ENCODE measurements at regions of chr16 and their contacts with region 1.

Region 1: GRCh38 chr16:69286941-69287713 is 24.0 kb upstream of the VPS4A start:
- DNase-seq: peak in 6 of 9 experiments; percentile 8 to 78 (median 48)
- ATAC-seq: no peak
- H3K4me3 ChIP-seq: no peak overlapping the region
- H3K4me3 Mint-ChIP-seq: no peak overlapping the region
- H3K27ac ChIP-seq: no peak overlapping the region
- H3K27ac Mint-ChIP-seq: no peak overlapping the region
- H3K4me1 ChIP-seq: no peaks in the 10 kb centered on the region
- H3K4me1 Mint-ChIP-seq: peaks cover 2% of the 10 kb centered on the region
- H3K27me3 ChIP-seq: no peaks in the 10 kb centered on the region
- H3K27me3 Mint-ChIP-seq: no peaks in the 10 kb centered on the region
- CTCF ChIP-seq: peak; percentile 73

Region 2: GRCh38 chr16:69150146-69150865 is 136.8 kb before region 1 on chr16:
- CTCF ChIA-PET with region 1: interaction called, 171 read pairs
- POLR2A ChIA-PET with region 1: interaction called, 7 read pairs
- intact Hi-C with region 1: loop called in 1 of 2 experiments (anchors 1 kb)
- DNase-seq: peak in 7 of 9 experiments; percentile 32 to 81 (median 60)
- ATAC-seq: peak; percentile 77
- H3K4me3 ChIP-seq: no peak overlapping the region
- H3K4me3 Mint-ChIP-seq: no peak overlapping the region
- H3K27ac ChIP-seq: no peak overlapping the region
- H3K27ac Mint-ChIP-seq: no peak overlapping the region
- H3K4me1 ChIP-seq: no peaks in the 10 kb centered on the region
- H3K4me1 Mint-ChIP-seq: no peaks in the 10 kb centered on the region
- H3K27me3 ChIP-seq: no peaks in the 10 kb centered on the region
- H3K27me3 Mint-ChIP-seq: no peaks in the 10 kb centered on the region
- CTCF ChIP-seq: peak; percentile 71

Region 3: DNA sequence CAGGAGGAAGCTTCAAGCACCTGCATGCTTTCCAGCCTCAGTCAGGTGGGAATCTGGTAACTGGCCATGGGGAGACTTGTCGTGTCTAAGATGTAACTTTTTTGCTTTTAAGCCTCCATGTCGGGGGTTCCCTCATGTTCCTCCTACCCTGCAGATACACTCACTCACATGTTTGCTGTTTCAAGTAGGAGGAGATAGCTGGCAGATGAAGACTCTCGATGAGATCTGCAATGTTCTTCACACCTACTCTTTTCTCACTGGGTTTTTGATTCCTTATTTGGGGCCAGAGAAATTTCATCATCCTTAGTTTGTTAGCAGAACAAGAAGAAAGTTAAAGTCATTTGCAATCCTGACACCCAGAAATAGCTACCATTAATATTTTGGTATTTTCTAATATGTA is 129.9 kb before region 1 on chr16:
- CTCF ChIA-PET with region 1: interaction called, 171 read pairs
- POLR2A ChIA-PET with region 1: no interaction called
- intact Hi-C with region 1: no loop called
- DNase-seq: no peak
- ATAC-seq: no peak
- H3K4me3 ChIP-seq: no peak overlapping the region
- H3K4me3 Mint-ChIP-seq: no peak overlapping the region
- H3K27ac ChIP-seq: no peak overlapping the region
- H3K27ac Mint-ChIP-seq: no peak overlapping the region
- H3K4me1 ChIP-seq: no peaks in the 10 kb centered on the region
- H3K4me1 Mint-ChIP-seq: no peaks in the 10 kb centered on the region
- H3K27me3 ChIP-seq: no peaks in the 10 kb centered on the region
- H3K27me3 Mint-ChIP-seq: no peaks in the 10 kb centered on the region
- CTCF ChIP-seq: no peak

Region 4: GRCh38 chr16:69166221-69166833 is 120.8 kb before region 1 on chr16:
- CTCF ChIA-PET with region 1: interaction called, 13 read pairs
- POLR2A ChIA-PET with region 1: no interaction called
- intact Hi-C with region 1: no loop called
- DNase-seq: peak in 5 of 9 experiments; percentile 21 to 60 (median 37)
- ATAC-seq: peak; percentile 86
- H3K4me3 ChIP-seq: no peak overlapping the region
- H3K4me3 Mint-ChIP-seq: peak overlapping the region; percentile 38
- H3K27ac ChIP-seq: peak overlapping the region in 1 of 2 experiments; percentile 30
- H3K27ac Mint-ChIP-seq: peak overlapping the region; percentile 75
- H3K4me1 ChIP-seq: peaks cover 13% of the 10 kb centered on the region
- H3K4me1 Mint-ChIP-seq: peaks cover 22% of the 10 kb centered on the region
- H3K27me3 ChIP-seq: no peaks in the 10 kb centered on the region
- H3K27me3 Mint-ChIP-seq: no peaks in the 10 kb centered on the region
- CTCF ChIP-seq: no peak

Measured in CD8-positive, alpha-beta T cell (primary cell).